T-cell (primary cell): ENCODE measurements at regions of chr3 and their contacts with region 1.

Region 1: DNA sequence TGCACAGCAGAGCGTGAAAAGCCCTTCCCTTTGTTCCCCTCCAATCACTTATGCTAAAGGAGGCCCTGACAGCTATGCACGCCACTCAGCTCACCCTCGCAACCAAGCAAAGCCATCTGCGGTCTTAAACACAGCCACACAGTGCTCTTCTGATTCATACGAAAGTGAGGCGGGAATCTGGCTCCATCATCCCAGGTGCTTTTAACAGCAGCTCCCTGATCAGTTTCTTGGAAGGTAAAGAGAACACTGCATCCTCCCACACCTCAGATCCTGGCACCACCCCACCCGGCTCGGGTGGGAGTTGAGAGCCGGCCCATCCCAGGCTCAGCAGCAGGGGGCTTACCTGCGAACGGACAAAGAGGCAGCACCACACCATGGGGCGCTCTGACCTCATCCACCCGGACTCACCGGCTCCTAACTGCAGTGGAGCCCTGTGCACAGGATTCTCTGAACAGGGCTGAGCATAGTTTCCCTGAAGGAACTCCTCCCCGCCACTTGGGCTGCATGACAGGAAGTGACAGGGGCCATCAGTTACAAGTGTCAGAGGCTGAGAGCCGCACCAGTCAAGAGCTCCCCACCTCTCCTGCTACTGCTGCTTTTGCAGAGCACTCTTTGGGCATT is 114.3 kb upstream of the ARHGEF3 start:
- DNase-seq: peak; percentile 40 to 83 (median 69)
- ATAC-seq: peak; percentile 90 to 94 (median 94)
- H3K4me3 ChIP-seq: peak overlapping the region; percentile 77 to 81
- H3K4me3 Mint-ChIP-seq: peak overlapping the region; percentile 87 to 93 (median 91)
- H3K27ac ChIP-seq: peak overlapping the region; percentile 75
- H3K27ac Mint-ChIP-seq: peak overlapping the region; percentile 97 to 99
- H3K4me1 ChIP-seq: peaks cover 35 to 50% of the 10 kb centered on the region in 2 experiments
- H3K4me1 Mint-ChIP-seq: peaks cover 68 to 85% (median 84%) of the 10 kb centered on the region in 3 donors
- H3K27me3 ChIP-seq: no peaks in the 10 kb centered on the region
- H3K27me3 Mint-ChIP-seq: no peaks in the 10 kb centered on the region

Region 2: GRCh38 chr3:56702490-56703315 is 213.4 kb before region 1 on chr3:
- CTCF ChIA-PET with region 1: interaction called, 3 to 12 read pairs
- POLR2A ChIA-PET with region 1: no interaction called
- DNase-seq: peak in 27 of 35 experiments; percentile 13 to 88 (median 43)
- ATAC-seq: peak; percentile 70 to 79 (median 72)
- H3K4me3 ChIP-seq: no peak overlapping the region
- H3K4me3 Mint-ChIP-seq: no peak overlapping the region
- H3K27ac ChIP-seq: no peak overlapping the region
- H3K27ac Mint-ChIP-seq: peak overlapping the region in 1 of 2 donors; percentile 28
- H3K4me1 ChIP-seq: peaks cover 5 to 15% of the 10 kb centered on the region in 2 experiments
- H3K4me1 Mint-ChIP-seq: peaks cover 19 to 27% (median 24%) of the 10 kb centered on the region in 3 donors
- H3K27me3 ChIP-seq: no peaks in the 10 kb centered on the region
- H3K27me3 Mint-ChIP-seq: no peaks in the 10 kb centered on the region